Aorta (tissue), 5 donors: ENCODE measurements at regions of chr3 and their contacts with region 1.

Region 1: DNA sequence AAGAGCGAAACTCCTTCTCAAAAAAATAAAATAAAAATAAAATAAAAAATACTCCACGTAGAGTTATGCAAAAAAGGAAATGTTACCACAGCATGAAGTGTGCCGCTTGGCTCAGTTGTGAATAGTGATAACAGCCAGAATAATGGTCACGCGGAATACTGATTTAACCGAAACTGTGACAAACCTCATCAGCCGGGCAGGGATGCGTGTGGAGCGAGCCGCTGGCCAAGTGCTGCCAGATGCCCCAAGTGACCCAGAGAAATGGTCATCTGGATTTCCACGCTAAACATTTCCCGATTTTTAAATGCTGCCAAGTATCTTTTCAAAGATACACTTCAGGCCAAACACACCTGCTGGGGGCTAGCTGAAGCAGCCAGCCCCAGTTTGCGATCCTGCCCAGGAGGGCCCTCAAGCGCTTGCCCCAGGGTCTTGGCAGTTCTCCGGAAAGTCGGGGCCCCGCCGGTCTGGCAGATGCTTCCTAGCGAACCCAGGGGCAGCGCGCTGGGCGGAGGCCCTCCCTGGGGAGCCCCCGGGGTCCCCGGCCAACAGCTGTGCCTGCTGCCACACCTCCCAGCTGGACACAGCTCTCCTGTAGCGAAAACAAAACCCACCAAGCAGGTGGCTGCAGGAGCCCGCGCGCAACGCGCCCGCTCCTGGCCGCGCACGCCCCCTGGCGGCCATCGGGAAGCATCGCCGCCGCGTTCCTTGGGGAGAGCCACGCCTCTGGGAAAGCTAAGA is 35.1 kb downstream of the CMTM6 start:
- DNase-seq: peak; percentile 72 to 90
- ATAC-seq: peak; percentile 93
- H3K4me3 ChIP-seq: no peak overlapping the region
- H3K27ac ChIP-seq: no peak overlapping the region
- H3K4me1 ChIP-seq: no peaks in the 10 kb centered on the region
- H3K27me3 ChIP-seq: no peaks in the 10 kb centered on the region

Region 2: DNA sequence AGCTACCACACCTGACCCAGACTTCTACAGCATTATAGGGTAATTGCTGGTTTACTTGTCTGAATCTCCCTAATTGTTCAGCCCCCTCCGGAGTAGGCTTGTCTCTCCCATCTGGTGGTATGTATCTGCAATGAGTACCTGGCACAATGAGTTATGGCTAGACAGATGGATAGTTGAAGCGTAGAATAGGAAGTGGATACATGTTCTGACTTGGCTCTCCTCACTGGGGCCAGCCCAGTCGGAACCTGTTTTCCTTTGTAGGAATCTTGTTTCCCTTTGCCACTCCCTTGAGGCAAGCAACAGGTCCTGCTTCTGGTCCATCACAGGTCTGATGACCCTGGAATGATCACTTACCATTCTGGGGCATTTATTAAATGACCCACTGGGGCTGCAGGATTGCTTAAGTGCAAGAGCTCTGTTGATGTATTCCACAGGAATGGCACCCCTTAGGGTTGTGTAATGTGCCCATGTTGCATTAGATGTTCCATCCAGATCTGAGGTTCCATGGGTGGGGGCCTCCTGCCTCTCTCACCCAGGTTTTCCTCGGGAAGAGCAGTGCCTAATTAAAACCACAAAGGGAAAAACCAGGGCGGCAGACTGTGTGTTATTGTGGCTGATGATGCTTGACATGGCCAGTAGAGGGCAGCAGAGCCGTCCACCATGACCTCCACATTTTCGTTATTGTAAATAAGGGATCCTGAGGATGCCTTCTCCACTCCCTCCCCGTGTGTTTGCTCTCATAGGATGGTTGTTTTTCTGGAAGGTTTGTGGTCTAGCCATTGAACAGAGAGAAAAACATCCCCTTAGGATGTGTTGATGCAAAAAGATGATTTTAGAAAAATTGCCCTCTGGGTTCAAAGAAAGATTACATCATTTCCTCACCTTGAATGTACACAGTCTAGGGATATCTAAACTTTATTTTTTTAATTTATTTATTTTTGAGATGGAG is 171.0 kb before region 1 on chr3:
- intact Hi-C with region 1: loop called (anchors 2 to 5 kb)
- DNase-seq: peak; percentile 55 to 81
- ATAC-seq: peak; percentile 87
- H3K4me3 ChIP-seq: no peak overlapping the region
- H3K27ac ChIP-seq: no peak overlapping the region
- H3K4me1 ChIP-seq: no peaks in the 10 kb centered on the region
- H3K27me3 ChIP-seq: no peaks in the 10 kb centered on the region

Region 3: DNA sequence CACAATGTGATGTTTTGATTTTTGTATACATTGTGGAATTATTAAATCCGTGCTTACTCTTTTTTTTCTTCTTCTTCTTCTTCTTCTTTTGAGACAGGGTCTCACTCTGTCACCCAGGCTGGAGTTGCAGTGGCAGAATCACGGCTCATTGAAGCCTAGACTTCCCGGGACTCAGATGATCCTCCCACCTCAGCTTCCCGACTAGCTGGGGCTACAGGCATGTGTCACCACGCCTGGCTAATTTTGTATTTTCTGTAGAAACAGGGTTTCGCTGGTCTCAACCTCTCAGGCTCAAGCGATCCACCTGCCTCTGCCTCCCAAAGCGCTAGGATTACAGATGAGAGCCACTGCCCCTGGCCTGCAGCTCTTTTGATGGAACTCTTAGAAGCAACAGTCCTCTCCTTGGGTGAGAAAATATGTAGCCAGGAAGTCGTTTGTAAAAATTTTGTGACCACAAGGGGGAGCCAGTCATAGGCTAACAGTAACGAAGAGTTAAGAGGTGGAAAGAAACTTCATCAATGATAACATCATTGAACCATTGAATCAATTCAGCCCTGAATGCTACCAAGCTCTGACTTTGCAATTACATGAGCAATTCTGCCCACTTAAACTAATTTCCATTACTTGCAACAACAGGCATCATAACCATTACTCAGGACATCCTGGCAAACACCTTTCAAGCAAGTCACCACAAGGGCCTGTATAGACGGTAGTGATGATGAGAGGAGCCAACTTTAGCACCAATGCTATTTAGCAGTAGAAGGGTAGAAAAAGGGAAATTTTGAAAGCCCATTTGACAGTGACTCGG is 92.5 kb before region 1 on chr3:
- intact Hi-C with region 1: loop called (anchors 5 kb)
- DNase-seq: no peak
- ATAC-seq: no peak
- H3K4me3 ChIP-seq: no peak overlapping the region
- H3K27ac ChIP-seq: no peak overlapping the region
- H3K4me1 ChIP-seq: no peaks in the 10 kb centered on the region
- H3K27me3 ChIP-seq: no peaks in the 10 kb centered on the region

Region 4: DNA sequence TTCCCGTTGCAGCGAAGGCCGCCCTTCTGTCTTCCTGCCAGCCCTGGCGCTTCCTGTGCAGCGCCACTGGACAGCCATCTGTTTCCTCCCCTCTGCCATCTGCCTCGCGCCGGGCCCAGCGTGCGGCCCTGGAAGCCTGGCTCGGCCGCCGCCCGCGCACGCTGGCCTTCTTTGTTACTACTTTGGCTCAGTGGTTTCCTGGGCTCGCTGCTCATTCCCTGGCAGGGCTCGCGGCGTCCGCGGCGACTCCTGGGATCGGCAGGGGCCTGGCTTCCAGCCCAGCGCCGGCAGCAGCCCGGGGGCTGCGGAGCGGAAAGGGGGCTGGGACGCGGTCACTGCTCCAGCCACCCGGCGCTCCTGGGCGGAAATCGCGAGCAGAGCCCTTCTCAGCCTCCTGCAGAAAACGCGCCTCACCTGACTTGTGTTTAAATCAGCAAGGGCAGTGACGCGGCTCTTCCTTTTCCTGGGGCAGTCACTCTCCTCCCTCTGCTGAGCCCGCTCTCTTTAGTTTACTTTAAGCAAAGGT is 65.9 kb before region 1 on chr3:
- intact Hi-C with region 1: loop called in 1 of 2 experiments (anchors 5 kb)
- DNase-seq: peak; percentile 87 to 91
- ATAC-seq: peak; percentile 92
- H3K4me3 ChIP-seq: peak overlapping the region; percentile 7 to 47
- H3K27ac ChIP-seq: peak overlapping the region in 1 of 2 donors; percentile 32
- H3K4me1 ChIP-seq: no peaks in the 10 kb centered on the region
- H3K27me3 ChIP-seq: no peaks in the 10 kb centered on the region

Region 5: GRCh38 chr3:32420126-32421038 is 47.1 kb before region 1 on chr3:
- intact Hi-C with region 1: no loop called
- DNase-seq: no peak
- ATAC-seq: no peak
- H3K4me3 ChIP-seq: no peak overlapping the region
- H3K27ac ChIP-seq: no peak overlapping the region
- H3K4me1 ChIP-seq: no peaks in the 10 kb centered on the region
- H3K27me3 ChIP-seq: no peaks in the 10 kb centered on the region

Region 6: GRCh38 chr3:32432711-32433530 is 34.6 kb before region 1 on chr3:
- intact Hi-C with region 1: no loop called
- DNase-seq: no peak
- ATAC-seq: no peak
- H3K4me3 ChIP-seq: no peak overlapping the region
- H3K27ac ChIP-seq: no peak overlapping the region
- H3K4me1 ChIP-seq: no peaks in the 10 kb centered on the region
- H3K27me3 ChIP-seq: no peaks in the 10 kb centered on the region

Region 7: DNA sequence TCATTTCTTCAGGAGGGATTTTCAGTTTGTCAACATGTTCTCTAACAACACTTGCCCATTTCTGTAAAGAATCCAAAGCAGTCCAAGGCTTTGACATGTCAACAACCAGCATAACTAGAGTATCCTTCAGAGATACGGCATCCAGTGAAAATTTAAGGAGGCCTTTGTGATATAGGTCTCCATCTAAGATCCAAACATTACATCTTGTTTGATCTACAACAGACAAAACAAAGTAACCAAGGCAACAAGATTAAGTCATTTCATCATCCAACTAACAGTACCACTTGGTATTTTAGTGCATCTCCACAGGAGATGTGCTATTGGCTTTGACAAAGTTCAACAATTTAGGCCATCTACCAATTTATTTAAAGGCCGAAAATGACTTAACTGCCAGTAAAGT is 77.4 kb after region 1 on chr3:
- intact Hi-C with region 1: no loop called
- DNase-seq: no peak
- ATAC-seq: no peak
- H3K4me3 ChIP-seq: no peak overlapping the region
- H3K27ac ChIP-seq: no peak overlapping the region
- H3K4me1 ChIP-seq: peaks cover 2 to 3% of the 10 kb centered on the region in 2 donors
- H3K27me3 ChIP-seq: no peaks in the 10 kb centered on the region

Region 8: GRCh38 chr3:32557643-32558352 is 90.3 kb after region 1 on chr3:
- intact Hi-C with region 1: no loop called
- DNase-seq: no peak
- ATAC-seq: no peak
- H3K4me3 ChIP-seq: no peak overlapping the region
- H3K27ac ChIP-seq: no peak overlapping the region
- H3K4me1 ChIP-seq: peaks cover 0 to 5% of the 10 kb centered on the region in 2 donors
- H3K27me3 ChIP-seq: no peaks in the 10 kb centered on the region